K562 (cell line): ENCODE measurements at regions of chr2 and their contacts with region 1.

Region 1: DNA sequence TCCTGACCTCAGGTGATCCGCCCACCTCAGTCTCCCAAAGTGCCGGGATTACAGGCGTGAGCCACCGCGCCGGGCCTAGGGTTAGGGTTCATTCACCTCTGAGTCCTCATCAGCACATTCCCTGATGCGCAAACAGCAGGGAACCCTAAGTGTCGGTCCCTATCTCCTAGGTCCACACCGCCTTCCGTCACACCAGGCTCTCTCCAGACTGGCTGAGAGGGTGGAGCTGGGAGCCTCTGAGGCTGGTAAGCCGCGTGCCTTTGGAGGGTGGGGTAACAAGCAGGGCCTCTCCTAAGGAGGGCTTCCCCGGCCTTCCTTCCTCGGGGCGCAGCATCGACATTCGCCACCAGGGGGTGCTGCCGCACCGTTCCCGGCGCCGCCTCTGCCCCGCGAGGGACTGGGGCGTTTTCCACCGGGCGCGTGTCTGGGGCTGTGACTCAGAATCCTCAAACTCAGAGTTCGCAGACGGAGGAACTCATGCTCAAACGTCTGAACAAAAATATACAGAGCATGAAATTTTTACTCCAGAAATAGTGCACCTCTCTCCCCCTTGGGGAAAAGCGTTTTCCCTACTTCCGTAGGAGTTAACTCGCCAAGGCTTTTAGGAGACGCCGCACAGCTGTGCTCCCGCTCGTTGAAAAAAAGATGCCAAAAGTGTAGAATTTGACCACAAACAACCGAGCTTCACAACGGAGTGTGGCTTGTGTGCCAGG is 63.9 kb upstream of the ASAP2 start:
- DNase-seq: peak; percentile 90 to 97 (median 96)
- ATAC-seq: peak; percentile 94
- H3K4me3 ChIP-seq: peak overlapping the region; percentile 5; the same call in 1 of the 2 replicates
- H3K27ac ChIP-seq: no peak overlapping the region
- H3K4me1 ChIP-seq: peaks cover 6 to 34% of the 10 kb centered on the region in 2 experiments; a peak in 4 of 5 replicates
- H3K27me3 ChIP-seq: peaks cover 5 to 11% of the 10 kb centered on the region in 2 experiments; a peak in 4 of 5 replicates
- CTCF ChIP-seq: peak; percentile 94 to 96 (median 95)
- EP300 ChIP-seq: no peak; the same call in 1 of the 2 replicates
- POLR2A ChIP-seq: no peak
- RAD21 ChIP-seq: peak; percentile 100

Region 2: DNA sequence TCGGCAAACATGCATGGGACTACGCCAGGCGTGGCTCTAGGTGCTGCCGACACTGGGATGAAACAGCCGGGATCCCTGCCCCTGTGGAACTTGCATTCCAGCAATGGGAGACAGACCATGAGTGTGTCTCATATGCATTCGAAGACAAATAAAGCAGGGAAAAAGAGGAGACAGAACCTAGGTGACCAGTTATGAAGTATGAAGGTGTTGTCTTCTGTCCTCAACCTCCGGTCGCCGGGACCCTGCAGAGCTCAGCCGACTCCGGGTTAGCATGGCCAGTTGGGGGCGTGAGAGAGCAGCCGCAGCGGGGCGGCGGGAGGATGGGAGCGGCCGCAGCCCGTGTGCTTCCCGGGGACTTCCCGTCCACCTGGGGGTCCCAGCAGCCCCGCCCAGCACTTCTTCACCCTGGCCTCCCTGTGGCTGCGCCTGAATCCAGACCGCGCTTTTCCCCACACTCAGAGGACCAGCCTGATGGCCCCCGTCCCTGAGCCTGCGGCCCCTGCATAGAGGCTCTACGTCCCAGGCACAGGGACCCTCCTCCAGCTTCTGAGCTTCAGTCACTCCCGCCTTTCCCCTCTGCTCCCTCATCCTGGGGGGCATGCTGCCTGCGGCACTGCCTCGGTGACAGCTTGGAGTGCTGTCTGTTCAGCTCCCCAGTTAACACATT is 449.4 kb before region 1 on chr2:
- CTCF ChIA-PET with region 1: no interaction called
- POLR2A ChIA-PET with region 1: no interaction called
- in situ Hi-C with region 1: no loop called
- intact Hi-C with region 1: loop called (anchors 5 kb)
- DNase-seq: peak; percentile 58 to 77 (median 73)
- ATAC-seq: peak; percentile 92
- H3K4me3 ChIP-seq: no peak overlapping the region
- H3K27ac ChIP-seq: no peak overlapping the region
- H3K4me1 ChIP-seq: peaks cover 10 to 17% of the 10 kb centered on the region in 2 experiments; a peak in 4 of 5 replicates
- H3K27me3 ChIP-seq: no peaks in the 10 kb centered on the region
- CTCF ChIP-seq: peak; percentile 76 to 89 (median 87)
- EP300 ChIP-seq: no peak
- POLR2A ChIP-seq: no peak
- RAD21 ChIP-seq: peak; percentile 41 to 75; a peak in 3 of 4 replicates

Region 3: GRCh38 chr2:8986327-8986976 is 156.3 kb before region 1 on chr2:
- CTCF ChIA-PET with region 1: no interaction called
- POLR2A ChIA-PET with region 1: no interaction called
- in situ Hi-C with region 1: no loop called
- intact Hi-C with region 1: loop called (anchors 5 kb)
- DNase-seq: peak in 3 of 4 experiments; percentile 37 to 85 (median 50)
- ATAC-seq: peak; percentile 83
- H3K4me3 ChIP-seq: peak overlapping the region; percentile 35; the same call in 1 of the 2 replicates
- H3K27ac ChIP-seq: peak overlapping the region; percentile 70
- H3K4me1 ChIP-seq: peaks cover 3 to 56% of the 10 kb centered on the region in 2 experiments; a peak in 4 of 5 replicates
- H3K27me3 ChIP-seq: no peaks in the 10 kb centered on the region
- CTCF ChIP-seq: peak; percentile 76 to 84 (median 82)
- EP300 ChIP-seq: no peak
- POLR2A ChIP-seq: no peak
- RAD21 ChIP-seq: peak; percentile 76 to 84

Region 4: DNA sequence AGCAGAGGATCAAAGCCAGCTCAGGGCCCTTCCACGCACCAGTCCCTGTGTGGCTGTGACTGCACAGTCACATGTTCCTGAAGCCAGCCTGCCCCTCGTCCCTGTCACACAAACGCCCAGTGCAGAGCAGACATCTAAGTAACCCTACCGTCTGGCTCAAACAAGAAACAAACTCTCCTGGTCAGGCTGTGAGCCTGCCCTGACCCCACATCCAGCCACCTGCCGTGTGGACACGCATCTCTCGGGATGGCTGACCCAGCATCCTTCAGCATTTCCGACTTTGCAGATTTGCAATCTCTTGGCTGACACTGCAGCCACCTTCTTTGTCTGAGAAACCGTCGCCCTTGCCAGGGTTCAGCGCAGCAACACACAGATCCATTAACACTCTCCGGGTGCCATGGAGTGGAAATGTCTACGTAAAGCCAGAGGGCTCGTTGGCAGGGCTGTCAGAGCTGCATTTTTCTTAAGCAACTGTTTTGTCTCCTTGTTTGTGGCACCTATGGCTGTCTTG is 18.4 kb before region 1 on chr2:
- CTCF ChIA-PET with region 1: no interaction called
- POLR2A ChIA-PET with region 1: no interaction called
- in situ Hi-C with region 1: no loop called
- intact Hi-C with region 1: no loop called
- DNase-seq: no peak
- ATAC-seq: peak; percentile 36; the same call in 2 of the 3 replicates
- H3K4me3 ChIP-seq: no peak overlapping the region
- H3K27ac ChIP-seq: no peak overlapping the region
- H3K4me1 ChIP-seq: no peaks in the 10 kb centered on the region
- H3K27me3 ChIP-seq: no peaks in the 10 kb centered on the region
- CTCF ChIP-seq: no peak
- EP300 ChIP-seq: no peak
- POLR2A ChIP-seq: no peak
- RAD21 ChIP-seq: no peak

Region 5: GRCh38 chr2:9205963-9206948 is 63.5 kb after region 1 on chr2 and contains the start of gene ASAP2:
- CTCF ChIA-PET with region 1: no interaction called
- POLR2A ChIA-PET with region 1: no interaction called
- in situ Hi-C with region 1: no loop called
- intact Hi-C with region 1: loop called (anchors 5 kb)
- DNase-seq: peak; percentile 84 to 97 (median 96)
- ATAC-seq: peak; percentile 85
- H3K4me3 ChIP-seq: peak within 1 kb of the TSS; percentile 69
- H3K27ac ChIP-seq: peak within 1 kb of the TSS; percentile 71
- H3K4me1 ChIP-seq: peaks cover 19 to 23% of the 10 kb centered on the region in 2 experiments; a peak in 4 of 5 replicates
- H3K27me3 ChIP-seq: no peaks in the 10 kb centered on the region
- CTCF ChIP-seq: peak; percentile 76 to 80 (median 80)
- EP300 ChIP-seq: no peak
- POLR2A ChIP-seq: 0 out of 2 replicates have a peak, but pooled peaks have one; percentile 37
- RAD21 ChIP-seq: peak; percentile 64 to 75
- polyA plus RNA-seq, gene ASAP2: 0.06 to 0.07 TPM

Region 6: GRCh38 chr2:9333591-9334171 is 191.0 kb after region 1 on chr2:
- CTCF ChIA-PET with region 1: interaction called, 13 read pairs
- POLR2A ChIA-PET with region 1: interaction called, 4 read pairs
- in situ Hi-C with region 1: no loop called
- intact Hi-C with region 1: loop called (anchors 1 kb)
- DNase-seq: peak; percentile 35 to 79 (median 46)
- ATAC-seq: peak; percentile 83
- H3K4me3 ChIP-seq: no peak overlapping the region
- H3K27ac ChIP-seq: no peak overlapping the region
- H3K4me1 ChIP-seq: peaks cover 18 to 37% of the 10 kb centered on the region in 2 experiments
- H3K27me3 ChIP-seq: no peaks in the 10 kb centered on the region; a peak in 1 of 5 replicates
- CTCF ChIP-seq: peak; percentile 70 to 88 (median 79)
- EP300 ChIP-seq: no peak
- POLR2A ChIP-seq: no peak
- RAD21 ChIP-seq: peak; percentile 76 to 84

Region 7: DNA sequence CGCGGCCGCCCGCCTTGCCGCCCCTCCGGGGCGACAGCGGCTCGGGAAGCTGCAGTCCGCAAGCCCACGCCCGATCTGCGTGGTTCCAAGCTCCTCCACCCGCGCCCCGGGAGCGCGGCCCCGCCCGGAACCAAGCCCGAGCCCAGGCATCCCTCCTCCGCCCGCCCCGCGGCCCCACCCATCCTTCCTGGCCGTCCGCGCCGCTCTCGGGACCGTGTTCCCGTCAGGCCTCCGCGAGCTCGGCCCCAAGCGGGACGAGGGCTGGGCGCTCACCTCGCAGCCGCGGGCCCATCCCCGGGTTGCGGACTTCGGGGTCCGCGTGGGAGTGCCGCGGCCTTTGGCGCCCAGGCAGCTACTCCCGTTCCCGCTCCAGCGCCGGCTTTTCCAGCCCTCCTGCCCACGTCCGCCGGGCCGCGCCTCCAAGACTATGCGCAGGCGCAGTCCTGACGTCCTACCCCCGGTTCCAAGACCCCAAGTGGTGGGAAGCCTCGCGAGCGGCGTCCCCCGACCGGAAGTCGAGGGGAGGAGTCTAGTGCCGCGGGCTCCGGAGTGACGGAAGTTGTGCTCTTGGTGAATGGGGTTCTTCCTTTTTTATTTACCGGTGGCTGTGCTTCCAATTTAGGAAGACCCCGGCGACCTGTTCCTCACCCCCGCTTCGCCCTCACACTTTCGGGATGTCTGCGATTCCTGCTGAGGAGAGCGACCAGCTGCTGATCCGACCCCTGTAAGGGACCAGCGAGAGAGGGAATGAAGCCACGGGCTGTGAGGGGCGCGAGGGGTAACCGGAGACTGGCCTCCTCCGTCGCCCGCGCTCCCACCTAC is 280.6 kb after region 1 on chr2 and contains the starts of genes CPSF3 and ITGB1BP1:
- CTCF ChIA-PET with region 1: no interaction called
- POLR2A ChIA-PET with region 1: interaction called, 4 read pairs
- in situ Hi-C with region 1: no loop called
- intact Hi-C with region 1: loop called (anchors 5 kb)
- DNase-seq: peak; percentile 99
- ATAC-seq: peak; percentile 93
- H3K4me3 ChIP-seq: peak within 1 kb of the TSS; percentile 90
- H3K27ac ChIP-seq: peak within 1 kb of the TSS; percentile 90
- H3K4me1 ChIP-seq: peaks cover 19 to 29% of the 10 kb centered on the region in 2 experiments; a peak in 4 of 5 replicates
- H3K27me3 ChIP-seq: no peaks in the 10 kb centered on the region
- CTCF ChIP-seq: peak in 2 of 3 experiments; percentile 1 to 24; a peak in 1 of 6 replicates
- EP300 ChIP-seq: no peak
- POLR2A ChIP-seq: peak; percentile 87
- RAD21 ChIP-seq: 0 out of 4 replicates have a peak, but pooled peaks of 1 of the 2 experiments have one; percentile 2
- polyA plus RNA-seq, gene CPSF3: 98.4 to 151 TPM
- polyA plus RNA-seq, gene ITGB1BP1: 37.8 to 50.4 TPM

Region 8: GRCh38 chr2:9770308-9771100 is 627.8 kb after region 1 on chr2:
- CTCF ChIA-PET with region 1: no interaction called
- POLR2A ChIA-PET with region 1: no interaction called
- in situ Hi-C with region 1: no loop called
- intact Hi-C with region 1: loop called (anchors 10 kb)
- DNase-seq: peak; percentile 76 to 83 (median 78)
- ATAC-seq: peak; percentile 86
- H3K4me3 ChIP-seq: no peak overlapping the region
- H3K27ac ChIP-seq: no peak overlapping the region
- H3K4me1 ChIP-seq: peaks cover 20 to 51% of the 10 kb centered on the region in 2 experiments; a peak in 4 of 5 replicates
- H3K27me3 ChIP-seq: no peaks in the 10 kb centered on the region; a peak in 1 of 5 replicates
- CTCF ChIP-seq: peak; percentile 80 to 83 (median 82)
- EP300 ChIP-seq: no peak
- POLR2A ChIP-seq: no peak
- RAD21 ChIP-seq: peak; percentile 50 to 68

Region 9: GRCh38 chr2:10036095-10036884 is 893.6 kb after region 1 on chr2:
- CTCF ChIA-PET with region 1: no interaction called
- POLR2A ChIA-PET with region 1: no interaction called
- in situ Hi-C with region 1: no loop called
- intact Hi-C with region 1: no loop called
- DNase-seq: no peak
- ATAC-seq: no peak
- H3K4me3 ChIP-seq: no peak overlapping the region
- H3K27ac ChIP-seq: no peak overlapping the region
- H3K4me1 ChIP-seq: peaks cover 21 to 63% of the 10 kb centered on the region in 2 experiments
- H3K27me3 ChIP-seq: no peaks in the 10 kb centered on the region
- CTCF ChIP-seq: peak in 2 of 3 experiments; percentile 10 to 23; a peak in 1 of 6 replicates
- EP300 ChIP-seq: no peak
- POLR2A ChIP-seq: no peak
- RAD21 ChIP-seq: no peak